Head of caudate nucleus (tissue), 42 donors: ENCODE measurements at regions of chr2 and their contacts with region 1.

Region 1: GRCh38 chr2:65554765-65555591 is 122.6 kb upstream of the SPRED2 start:
- DNase-seq: no peak

Region 2: DNA sequence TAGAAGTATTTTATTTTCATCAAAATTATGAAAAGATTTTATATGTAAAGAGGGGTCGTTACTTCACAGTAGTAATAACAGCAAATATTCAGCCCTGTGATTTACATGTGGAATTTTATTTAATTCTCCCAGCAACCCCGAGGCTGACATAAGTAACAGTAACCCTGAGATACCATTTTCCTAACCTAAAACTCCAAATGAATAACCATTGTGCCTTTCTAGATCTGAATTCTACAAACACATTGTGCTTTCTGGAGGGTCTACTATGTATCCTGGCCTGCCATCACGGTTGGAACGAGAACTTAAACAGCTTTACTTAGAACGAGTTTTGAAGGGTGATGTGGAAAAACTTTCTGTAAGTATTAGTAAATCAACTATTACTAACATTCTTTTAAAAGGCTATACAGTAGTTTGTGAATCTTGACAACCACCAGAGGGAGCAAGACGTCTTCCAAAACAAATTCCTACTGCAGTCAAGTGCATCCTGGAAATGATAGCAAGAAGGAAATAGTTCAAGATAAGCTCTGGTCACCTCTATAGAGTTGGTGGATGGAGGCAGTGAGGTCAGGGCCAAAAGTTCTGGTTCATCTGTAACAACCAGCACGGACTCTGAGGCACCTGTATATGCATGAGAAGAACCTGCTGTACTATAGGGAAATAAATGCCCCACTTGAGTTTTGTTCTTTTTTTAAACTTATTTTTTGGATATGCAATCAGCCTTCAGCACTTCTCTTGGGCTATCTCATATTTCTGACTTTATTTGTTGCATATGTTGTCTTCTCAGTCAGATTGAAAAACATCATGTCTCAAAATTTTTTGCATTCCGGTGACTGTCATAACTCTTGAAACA is 289.9 kb before region 1 on chr2:
- intact Hi-C with region 1: loop called (anchors 5 kb)
- DNase-seq: peak in 24 of 42 donors; percentile 18 to 79 (median 50)

Region 3: DNA sequence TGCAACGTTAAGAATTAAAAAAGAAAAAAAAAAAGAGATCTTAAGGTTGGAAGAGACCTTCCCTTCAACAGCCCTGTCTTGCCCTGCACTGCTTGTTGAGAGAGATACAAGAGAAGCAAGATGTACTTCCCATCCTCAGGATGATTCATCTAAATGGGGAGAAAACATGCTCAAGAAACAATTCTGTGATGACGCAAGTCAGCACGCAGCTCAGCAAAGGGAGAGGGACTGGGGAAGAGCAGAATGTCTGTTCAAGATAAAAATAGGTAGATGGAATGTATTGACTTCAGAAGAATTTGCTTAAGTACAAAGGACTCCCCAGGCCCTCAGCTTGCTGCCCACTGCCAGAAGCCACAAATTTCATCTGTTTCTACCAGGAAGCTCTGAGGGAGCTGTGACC is 75.7 kb after region 1 on chr2:
- intact Hi-C with region 1: no loop called
- DNase-seq: peak in 30 of 42 donors; percentile 3 to 63 (median 31)